Activated CD4-positive, alpha-beta memory T cell treated with anti-CD3 and anti-CD28 coated beads for 36 hours (primary cell): ENCODE measurements at regions of chr3 and their contacts with region 1.

Region 1: GRCh38 chr3:47836986-47837385 is 34.0 kb downstream of the DHX30 start:
- DNase-seq: no peak
- H3K4me3 Mint-ChIP-seq: no peak overlapping the region
- H3K27ac Mint-ChIP-seq: no peak overlapping the region
- H3K4me1 Mint-ChIP-seq: no peaks in the 10 kb centered on the region
- H3K27me3 Mint-ChIP-seq: no peaks in the 10 kb centered on the region

Region 2: GRCh38 chr3:48151058-48151806 is 314.2 kb after region 1 on chr3:
- CTCF ChIA-PET with region 1: interaction called, 30 read pairs
- POLR2A ChIA-PET with region 1: no interaction called
- intact Hi-C with region 1: no loop called
- DNase-seq: peak; percentile 80
- H3K4me3 Mint-ChIP-seq: no peak overlapping the region
- H3K27ac Mint-ChIP-seq: no peak overlapping the region
- H3K4me1 Mint-ChIP-seq: no peaks in the 10 kb centered on the region
- H3K27me3 Mint-ChIP-seq: no peaks in the 10 kb centered on the region

Region 3: DNA sequence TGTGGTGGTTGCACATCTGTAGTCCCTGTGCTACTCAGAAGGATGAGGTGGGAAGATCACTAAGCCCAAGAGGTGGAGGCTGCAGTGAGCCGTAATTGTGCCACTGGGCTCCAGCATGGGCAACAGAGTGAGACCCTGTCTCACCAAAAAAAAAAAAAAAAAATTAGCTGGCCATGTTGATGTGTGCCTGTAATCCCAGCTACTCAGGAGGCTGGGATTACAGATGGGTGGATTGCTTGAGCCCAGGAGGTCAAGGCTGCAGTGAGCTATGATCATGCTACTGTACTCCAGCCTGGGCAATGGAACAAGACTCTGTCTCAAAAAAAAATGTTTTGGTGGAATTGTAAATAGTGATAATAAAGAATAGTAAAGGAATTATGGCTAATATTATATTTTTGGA is 619.5 kb after region 1 on chr3:
- CTCF ChIA-PET with region 1: no interaction called
- POLR2A ChIA-PET with region 1: no interaction called
- intact Hi-C with region 1: no loop called
- DNase-seq: no peak
- H3K4me3 Mint-ChIP-seq: no peak overlapping the region
- H3K27ac Mint-ChIP-seq: peak overlapping the region; percentile 28
- H3K4me1 Mint-ChIP-seq: no peaks in the 10 kb centered on the region
- H3K27me3 Mint-ChIP-seq: no peaks in the 10 kb centered on the region